ENCODE measurements at regions of chr16 and their contacts with region 1.

Region 1: GRCh38 chr16:28553776-28554633 is at the start of gene SGF29:
- DNase-seq: peak; percentile 91
- ATAC-seq: peak; percentile 89
- H3K4me3 Mint-ChIP-seq: peak within 1 kb of the TSS; percentile 88
- H3K27ac Mint-ChIP-seq: peak within 1 kb of the TSS; percentile 94
- H3K4me1 Mint-ChIP-seq: peaks cover 20% of the 10 kb centered on the region
- H3K27me3 Mint-ChIP-seq: no peaks in the 10 kb centered on the region
- total RNA-seq, gene SGF29: 47.0 to 49.8 TPM

Region 2: DNA sequence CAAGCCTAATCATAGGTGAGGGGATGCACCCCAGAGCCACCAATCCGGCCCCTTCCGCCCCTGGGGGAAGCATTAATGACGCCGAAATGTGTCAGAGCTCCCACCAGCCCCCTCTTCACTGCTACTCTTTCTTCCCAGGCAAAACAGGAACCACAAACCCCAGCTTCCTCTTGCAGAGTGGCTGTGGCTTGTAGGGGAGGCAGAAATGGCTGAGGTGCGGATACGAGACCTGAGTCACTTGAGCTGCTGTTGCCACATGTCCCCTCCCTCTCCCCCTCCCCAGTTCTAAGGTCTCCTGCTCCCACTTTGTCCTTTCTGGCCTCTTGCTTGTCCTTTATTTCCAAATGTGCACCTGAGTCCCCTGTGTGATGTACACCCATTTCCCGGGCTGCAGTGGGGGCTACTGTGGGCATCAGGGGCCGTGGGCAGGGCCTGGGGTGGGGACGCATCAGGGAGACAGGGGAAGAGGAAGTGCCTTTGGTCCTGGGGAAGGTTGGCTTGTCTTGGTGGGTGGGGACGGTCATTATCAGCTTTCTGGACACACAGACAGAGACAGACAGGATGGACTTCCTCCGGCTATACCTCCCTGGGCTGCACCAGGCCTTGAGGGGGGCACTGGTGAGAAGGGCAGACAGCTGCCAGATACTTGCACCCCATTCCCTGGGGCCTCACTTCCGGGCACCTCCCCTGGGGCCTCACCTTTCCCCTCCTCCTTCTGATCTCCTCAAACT is 59.7 kb before region 1 on chr16 and contains the start of gene APOBR:
- POLR2A ChIA-PET with region 1: interaction called, 10 read pairs
- DNase-seq: peak; percentile 81
- ATAC-seq: peak; percentile 74
- H3K4me3 Mint-ChIP-seq: peak within 1 kb of the TSS; percentile 97
- H3K27ac Mint-ChIP-seq: peak within 1 kb of the TSS; percentile 96
- H3K4me1 Mint-ChIP-seq: peaks cover 40% of the 10 kb centered on the region
- H3K27me3 Mint-ChIP-seq: no peaks in the 10 kb centered on the region
- total RNA-seq, gene APOBR: 23.9 to 26.1 TPM

Region 3: GRCh38 chr16:28597692-28598261 is 43.8 kb after region 1 on chr16:
- POLR2A ChIA-PET with region 1: no interaction called
- DNase-seq: no peak
- ATAC-seq: no peak
- H3K4me3 Mint-ChIP-seq: no peak overlapping the region
- H3K27ac Mint-ChIP-seq: peak overlapping the region; percentile 30
- H3K4me1 Mint-ChIP-seq: peaks cover 18% of the 10 kb centered on the region
- H3K27me3 Mint-ChIP-seq: no peaks in the 10 kb centered on the region